IMR-90 (cell line): ENCODE measurements at regions of chr14 and their contacts with region 1.

Region 1: GRCh38 chr14:22190411-22191191 is 398.4 kb downstream of the DAD1 start:
- DNase-seq: peak; percentile 100
- ATAC-seq: peak; percentile 86
- H3K4me3 ChIP-seq: no peak overlapping the region
- H3K27ac ChIP-seq: peak overlapping the region; percentile 98
- H3K4me1 ChIP-seq: peaks cover 11% of the 10 kb centered on the region
- H3K27me3 ChIP-seq: no peaks in the 10 kb centered on the region
- CTCF ChIP-seq: no peak
- POLR2A ChIP-seq: no peak
- RAD21 ChIP-seq: no peak

Region 2: DNA sequence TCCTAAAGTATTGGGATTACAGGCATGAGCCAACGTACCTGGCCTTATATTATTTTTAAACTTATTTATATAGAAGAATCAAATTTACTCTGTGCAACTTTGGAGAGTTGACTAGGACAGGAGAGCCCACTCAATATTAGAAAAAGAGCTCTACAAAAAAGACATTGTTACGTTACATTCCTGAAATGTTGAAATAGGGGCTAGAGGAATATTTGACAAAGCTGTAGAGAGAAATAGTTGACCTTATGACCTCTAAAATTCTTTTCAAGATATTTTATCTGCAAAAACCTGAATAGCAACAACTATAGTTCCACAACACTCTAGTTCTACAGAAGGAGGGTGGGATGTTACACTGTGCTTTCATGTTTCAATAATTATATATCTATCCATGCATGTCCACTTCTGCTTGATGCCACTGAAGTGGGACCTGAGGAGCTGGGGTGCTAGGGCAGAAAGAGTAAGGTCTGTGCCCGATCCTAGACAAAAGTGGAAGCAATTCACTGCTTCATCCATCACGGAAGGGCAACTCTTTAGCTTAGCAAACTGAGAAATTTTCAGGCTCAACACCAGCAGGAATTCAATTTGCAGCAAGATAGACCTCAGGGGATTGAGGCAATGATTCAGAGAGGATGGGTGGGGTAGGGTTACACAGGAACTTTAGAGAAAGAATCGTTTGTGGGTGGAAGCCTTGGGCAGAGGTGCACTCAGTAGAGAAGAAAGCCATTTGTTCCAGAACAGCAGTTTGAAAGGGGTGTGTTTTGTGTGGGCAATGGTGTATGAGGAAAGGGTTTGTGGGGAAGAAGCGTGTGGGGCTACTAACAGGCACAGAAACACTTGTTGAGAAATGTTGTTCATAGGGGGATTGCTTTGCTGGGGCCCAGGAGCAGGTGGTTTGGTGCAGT is 1701.3 kb before region 1 on chr14:
- CTCF ChIA-PET with region 1: no interaction called
- POLR2A ChIA-PET with region 1: no interaction called
- dilution Hi-C with region 1: no loop called
- in situ Hi-C with region 1: no loop called
- intact Hi-C with region 1: loop called (anchors 10 kb)
- DNase-seq: peak; percentile 28
- ATAC-seq: no peak
- H3K4me3 ChIP-seq: no peak overlapping the region
- H3K27ac ChIP-seq: no peak overlapping the region
- H3K4me1 ChIP-seq: no peaks in the 10 kb centered on the region; the same call in 1 of the 2 replicates
- H3K27me3 ChIP-seq: no peaks in the 10 kb centered on the region; the same call in none of the 2 replicates
- CTCF ChIP-seq: no peak
- POLR2A ChIP-seq: no peak
- RAD21 ChIP-seq: no peak

Region 3: GRCh38 chr14:22478670-22479069 is 288.1 kb after region 1 on chr14:
- CTCF ChIA-PET with region 1: no interaction called
- POLR2A ChIA-PET with region 1: no interaction called
- dilution Hi-C with region 1: no loop called
- in situ Hi-C with region 1: no loop called
- intact Hi-C with region 1: no loop called
- DNase-seq: no peak
- ATAC-seq: no peak
- H3K4me3 ChIP-seq: no peak overlapping the region
- H3K27ac ChIP-seq: no peak overlapping the region
- H3K4me1 ChIP-seq: no peaks in the 10 kb centered on the region
- H3K27me3 ChIP-seq: peaks cover 68% of the 10 kb centered on the region
- CTCF ChIP-seq: no peak
- POLR2A ChIP-seq: no peak
- RAD21 ChIP-seq: no peak

Region 4: GRCh38 chr14:22536853-22537338 is 346.3 kb after region 1 on chr14:
- CTCF ChIA-PET with region 1: no interaction called
- POLR2A ChIA-PET with region 1: no interaction called
- dilution Hi-C with region 1: no loop called
- in situ Hi-C with region 1: no loop called
- intact Hi-C with region 1: loop called (anchors 10 kb)
- DNase-seq: peak; percentile 98
- ATAC-seq: peak; percentile 96
- H3K4me3 ChIP-seq: no peak overlapping the region
- H3K27ac ChIP-seq: peak overlapping the region; percentile 93
- H3K4me1 ChIP-seq: peaks cover 12% of the 10 kb centered on the region
- H3K27me3 ChIP-seq: no peaks in the 10 kb centered on the region
- CTCF ChIP-seq: no peak
- POLR2A ChIP-seq: no peak
- RAD21 ChIP-seq: no peak